Right ventricle myocardium inferior (tissue), 1 donor: ENCODE measurements at regions of chr20 and their contacts with region 1.

Region 1: DNA sequence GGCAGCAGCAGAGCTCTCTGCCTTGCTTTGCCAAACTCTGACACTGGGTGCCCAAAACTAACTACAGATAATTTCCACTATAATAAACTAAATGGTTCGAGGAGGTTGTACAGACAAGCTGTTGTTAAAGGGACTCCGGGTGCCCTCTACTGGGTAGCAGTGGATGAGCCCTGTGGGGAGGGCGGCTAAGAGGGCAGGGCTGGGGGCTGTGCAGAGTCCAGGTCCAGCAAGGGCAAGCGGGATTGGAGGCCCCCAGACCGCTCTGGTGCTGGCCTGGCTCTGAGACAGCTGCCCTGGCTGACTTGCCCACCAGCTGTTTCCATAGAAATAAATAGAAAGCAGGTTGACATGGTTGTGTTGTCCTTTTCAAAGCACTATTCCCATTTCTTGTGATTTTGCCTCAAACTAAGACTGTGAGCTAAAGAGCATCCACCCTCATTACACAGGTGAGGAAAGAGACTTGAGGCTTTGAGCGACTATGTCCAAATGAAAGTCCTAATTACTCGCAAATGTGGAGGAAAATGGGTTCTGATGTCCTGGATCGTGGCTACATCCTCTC is 167.6 kb upstream of the CST7 start:
- DNase-seq: peak; percentile 56
- ATAC-seq: no peak

Region 2: GRCh38 chr20:24149881-24150307 is 631.6 kb before region 1 on chr20:
- intact Hi-C with region 1: loop called (anchors 10 kb)
- DNase-seq: no peak
- ATAC-seq: peak; percentile 84

Region 3: DNA sequence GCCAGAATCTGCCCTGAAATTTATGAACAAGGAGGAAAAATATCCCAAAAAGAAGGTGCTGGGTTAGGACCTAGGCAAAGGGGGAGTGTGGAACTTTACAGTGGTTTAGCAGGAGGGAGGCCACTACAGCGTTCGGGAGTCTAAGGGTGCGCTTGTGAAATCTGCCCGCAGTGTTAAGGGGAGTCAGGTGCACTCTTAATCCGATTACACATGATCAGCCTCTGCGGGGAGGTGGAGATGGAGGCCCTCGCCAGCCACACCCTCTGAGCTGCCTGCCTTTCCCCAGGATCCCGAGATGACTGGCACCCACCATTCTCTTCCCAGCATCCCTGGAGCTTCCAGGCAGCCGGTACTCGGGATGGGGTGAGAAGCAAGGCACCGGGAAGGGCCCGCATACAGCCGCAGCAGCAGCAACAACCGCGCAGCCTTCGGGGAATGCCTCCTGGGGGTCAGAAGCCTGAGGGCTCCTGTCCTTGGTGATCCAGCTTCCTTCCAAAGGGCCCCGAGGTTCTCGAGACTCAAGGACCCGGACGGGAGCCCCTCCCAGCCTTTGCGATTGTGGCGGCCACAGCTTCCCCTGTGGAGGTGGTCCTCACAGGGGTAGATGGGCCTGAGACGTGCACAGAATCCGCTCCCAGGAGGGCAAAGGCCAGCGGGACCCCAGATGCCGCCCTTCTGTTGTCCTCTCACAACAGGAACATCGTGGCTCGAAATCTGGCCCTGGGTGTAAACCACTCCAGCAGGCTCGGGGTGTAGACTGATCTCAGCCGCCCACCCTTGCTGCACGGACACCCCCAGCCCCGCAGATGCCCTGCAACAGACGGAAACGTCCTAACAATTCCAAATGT is 110.3 kb after region 1 on chr20:
- intact Hi-C with region 1: no loop called
- DNase-seq: peak; percentile 57
- ATAC-seq: no peak